ENCODE measurements at regions of chr1 and their contacts with region 1.

Region 1: DNA sequence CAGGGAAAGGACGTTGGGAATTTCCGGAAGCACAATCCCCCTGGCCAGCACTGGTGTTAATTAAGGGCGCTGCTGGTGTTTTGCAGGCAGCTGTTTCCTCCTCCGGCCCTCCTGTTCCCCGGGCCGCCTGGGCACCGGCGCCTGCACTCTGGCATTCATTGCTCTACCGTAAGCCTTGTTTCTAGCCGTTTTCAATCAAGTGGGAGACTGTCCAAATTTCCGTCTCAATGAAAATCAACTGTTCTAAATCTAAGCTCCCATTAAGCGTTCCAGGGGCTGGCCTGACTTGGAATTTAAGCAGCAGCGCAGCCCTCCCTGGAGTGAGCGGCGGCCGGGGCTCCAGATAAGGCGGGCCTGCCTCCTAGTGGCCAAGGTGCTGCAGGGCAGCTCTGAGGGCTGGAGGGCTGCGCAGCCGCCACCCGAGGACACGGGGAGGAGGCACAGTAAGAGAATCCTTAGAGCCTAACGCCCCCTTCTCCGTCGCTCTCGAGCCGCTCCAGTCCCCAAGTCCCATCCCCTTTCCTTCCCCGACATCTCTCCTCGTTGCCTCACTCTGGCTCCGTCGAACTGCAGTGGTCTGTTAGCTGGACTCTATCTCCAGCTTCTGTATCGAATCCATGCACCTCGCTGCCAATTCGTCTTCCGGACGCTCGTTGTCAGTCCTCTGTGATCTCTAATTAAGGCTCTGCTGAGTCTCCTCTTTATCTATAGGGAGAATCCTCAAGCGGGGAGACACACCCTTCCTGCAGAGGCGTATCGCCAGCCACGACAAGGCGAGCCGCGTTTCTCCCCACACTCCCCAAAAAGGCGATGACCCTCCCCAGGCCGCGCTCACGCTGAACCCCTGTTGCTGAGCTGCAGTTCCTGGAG is 57.8 kb upstream of the LRRC8D start:
- DNase-seq: peak; percentile 42
- ATAC-seq: peak; percentile 100
- H3K4me3 ChIP-seq: peak overlapping the region; percentile 31 to 73 (median 46); a peak in 5 of 6 replicates
- H3K27ac ChIP-seq: no peak overlapping the region
- H3K4me1 ChIP-seq: peaks cover 20% of the 10 kb centered on the region
- H3K27me3 ChIP-seq: peaks cover 8 to 38% of the 10 kb centered on the region in 2 experiments
- CTCF ChIP-seq: peak; percentile 98
- EP300 ChIP-seq: no peak
- POLR2A ChIP-seq: no peak
- RAD21 ChIP-seq: peak; percentile 90

Region 2: GRCh38 chr1:89483010-89483756 is 279.8 kb before region 1 on chr1:
- CTCF ChIA-PET with region 1: interaction called, 23 read pairs
- POLR2A ChIA-PET with region 1: no interaction called
- in situ Hi-C with region 1: loop called (anchors 5 kb)
- intact Hi-C with region 1: no loop called
- DNase-seq: peak; percentile 59
- ATAC-seq: peak; percentile 87
- H3K4me3 ChIP-seq: no peak overlapping the region
- H3K27ac ChIP-seq: no peak overlapping the region
- H3K4me1 ChIP-seq: no peaks in the 10 kb centered on the region
- H3K27me3 ChIP-seq: no peaks in the 10 kb centered on the region; a peak in 1 of 5 replicates
- CTCF ChIP-seq: peak; percentile 80
- EP300 ChIP-seq: no peak
- POLR2A ChIP-seq: no peak
- RAD21 ChIP-seq: 0 out of 2 replicates have a peak, but pooled peaks have one; percentile 21

Region 3: GRCh38 chr1:89632657-89633247 is 130.3 kb before region 1 on chr1 and contains the start of gene LRRC8C:
- CTCF ChIA-PET with region 1: no interaction called
- POLR2A ChIA-PET with region 1: no interaction called
- in situ Hi-C with region 1: loop called (anchors 5 kb)
- intact Hi-C with region 1: loop called (anchors 1 kb)
- DNase-seq: peak; percentile 8
- ATAC-seq: peak; percentile 97
- H3K4me3 ChIP-seq: peak within 1 kb of the TSS; percentile 61 to 86 (median 61)
- H3K27ac ChIP-seq: no peak within 1 kb of the TSS
- H3K4me1 ChIP-seq: peaks cover 21% of the 10 kb centered on the region
- H3K27me3 ChIP-seq: peaks cover 0 to 45% of the 10 kb centered on the region in 2 experiments; a peak in 4 of 5 replicates
- CTCF ChIP-seq: peak; percentile 39; the same call in 1 of the 2 replicates
- EP300 ChIP-seq: no peak
- POLR2A ChIP-seq: no peak
- RAD21 ChIP-seq: peak; percentile 60
- total RNA-seq, gene LRRC8C: 0.22 TPM in 2 replicates